Activated CD4-positive, alpha-beta memory T cell treated with anti-CD3 and anti-CD28 coated beads, Interleukin-2, amount 10 ng/mL, durations not matched to agents 7 days and 5 days (primary cell): ENCODE measurements at regions of chr6 and their contacts with region 1.

Region 1: DNA sequence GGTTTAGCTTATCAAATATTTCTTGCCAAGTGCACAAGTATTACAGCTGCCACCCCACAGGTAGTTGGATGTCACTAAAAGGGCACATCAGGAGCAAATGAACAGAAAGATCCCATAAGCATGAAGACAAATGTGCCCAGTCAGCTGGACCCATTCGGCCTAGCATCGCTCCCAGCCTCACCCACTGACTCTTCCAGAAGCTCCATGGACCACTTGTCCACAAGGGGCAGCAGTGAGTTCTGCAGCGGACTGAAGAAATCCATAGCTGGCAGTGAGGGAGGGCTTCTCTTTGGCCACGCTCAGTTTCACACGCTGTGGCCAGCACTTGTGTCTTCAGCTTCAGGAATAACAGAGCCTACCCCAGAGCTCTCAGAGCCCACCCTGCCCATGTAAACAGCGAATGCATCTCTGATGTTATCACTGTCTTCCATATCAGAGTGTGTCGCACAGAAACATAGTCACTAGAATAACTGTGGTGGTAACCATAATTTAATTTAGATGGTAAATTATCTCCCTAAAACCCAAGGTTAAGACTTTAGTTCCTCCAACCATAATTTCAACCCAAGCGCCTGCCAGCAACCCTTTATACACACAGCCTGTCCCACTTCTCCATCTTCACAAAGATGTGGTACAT is 15.8 kb downstream of the CGA start:
- DNase-seq: peak; percentile 52
- H3K4me3 Mint-ChIP-seq: no peak overlapping the region
- H3K27ac Mint-ChIP-seq: no peak overlapping the region
- H3K4me1 Mint-ChIP-seq: peaks cover 12% of the 10 kb centered on the region
- H3K27me3 Mint-ChIP-seq: peaks cover 21% of the 10 kb centered on the region

Region 2: GRCh38 chr6:87049779-87050178 is 29.3 kb before region 1 on chr6:
- CTCF ChIA-PET with region 1: interaction called, 11 read pairs
- POLR2A ChIA-PET with region 1: no interaction called
- DNase-seq: no peak
- H3K4me3 Mint-ChIP-seq: no peak overlapping the region
- H3K27ac Mint-ChIP-seq: no peak overlapping the region
- H3K4me1 Mint-ChIP-seq: no peaks in the 10 kb centered on the region
- H3K27me3 Mint-ChIP-seq: peaks cover 27% of the 10 kb centered on the region

Region 3: DNA sequence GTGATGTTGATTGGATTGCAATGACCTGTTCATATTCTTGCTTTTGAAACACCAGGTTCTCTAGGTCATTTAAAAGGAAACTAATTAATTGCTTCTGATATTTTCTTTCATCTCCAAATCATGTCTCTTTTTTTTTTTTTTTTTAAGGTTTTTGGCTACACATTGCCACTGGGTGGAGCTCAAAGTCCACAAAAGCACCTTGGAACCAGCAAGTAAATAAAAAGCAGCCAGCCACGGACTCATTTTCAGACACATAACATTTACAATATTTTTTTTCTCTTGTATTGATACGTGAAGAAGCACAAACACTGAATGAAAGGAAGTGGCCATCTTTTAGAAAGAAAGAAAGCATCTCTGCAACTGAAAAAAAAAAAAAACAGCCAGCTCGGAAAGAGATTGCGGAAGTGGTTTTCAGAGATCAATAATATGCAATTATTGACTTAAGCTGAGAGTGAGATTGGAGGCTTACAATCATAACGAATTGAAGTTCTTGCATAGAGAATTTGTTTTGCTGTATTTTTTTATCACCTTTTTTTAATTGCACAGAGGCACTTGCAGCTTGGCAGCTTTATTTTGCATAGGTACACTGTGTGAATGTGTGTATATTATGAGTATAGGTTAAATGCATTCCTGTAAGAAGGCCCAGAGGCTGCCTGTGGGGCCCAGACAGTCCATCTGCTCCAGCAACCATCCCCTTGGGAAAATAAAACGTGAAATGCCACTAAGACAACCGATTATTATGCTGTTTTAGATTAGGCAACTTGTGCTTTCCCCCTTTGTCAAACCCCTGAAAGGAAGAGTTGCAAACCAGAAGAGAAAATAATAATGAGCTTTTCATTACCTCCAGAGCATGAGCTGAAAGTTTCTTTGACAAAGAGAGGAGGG is 12.4 kb before region 1 on chr6:
- CTCF ChIA-PET with region 1: interaction called, 23 read pairs
- POLR2A ChIA-PET with region 1: no interaction called
- DNase-seq: peak; percentile 48
- H3K4me3 Mint-ChIP-seq: peak overlapping the region; percentile 36
- H3K27ac Mint-ChIP-seq: no peak overlapping the region
- H3K4me1 Mint-ChIP-seq: peaks cover 9% of the 10 kb centered on the region
- H3K27me3 Mint-ChIP-seq: peaks cover 29% of the 10 kb centered on the region

Region 4: DNA sequence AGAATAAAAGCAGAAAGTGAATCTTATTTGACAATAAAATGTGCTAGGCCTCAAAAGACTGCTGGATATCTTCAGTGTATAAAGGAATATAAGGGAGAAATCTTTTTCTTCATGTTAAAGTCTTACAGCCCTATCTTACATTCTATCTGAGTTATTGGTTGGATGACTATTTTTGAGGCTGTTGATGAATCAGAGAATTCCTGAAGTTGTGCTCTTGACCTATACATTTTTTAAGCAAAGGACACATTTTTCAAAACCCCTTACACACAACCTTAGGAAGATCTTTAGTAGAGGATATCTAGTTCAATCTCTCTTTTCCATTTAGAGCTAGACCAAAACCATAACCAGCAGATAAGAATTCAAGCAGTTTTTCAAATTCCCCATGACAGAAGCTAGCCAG is 26.7 kb after region 1 on chr6:
- CTCF ChIA-PET with region 1: interaction called, 14 read pairs
- POLR2A ChIA-PET with region 1: no interaction called
- DNase-seq: no peak
- H3K4me3 Mint-ChIP-seq: no peak overlapping the region
- H3K27ac Mint-ChIP-seq: no peak overlapping the region
- H3K4me1 Mint-ChIP-seq: no peaks in the 10 kb centered on the region
- H3K27me3 Mint-ChIP-seq: peaks cover 20% of the 10 kb centered on the region

Region 5: GRCh38 chr6:87808005-87808757 is 729.1 kb after region 1 on chr6:
- CTCF ChIA-PET with region 1: no interaction called
- POLR2A ChIA-PET with region 1: no interaction called
- DNase-seq: no peak
- H3K4me3 Mint-ChIP-seq: no peak overlapping the region
- H3K27ac Mint-ChIP-seq: no peak overlapping the region
- H3K4me1 Mint-ChIP-seq: peaks cover 13% of the 10 kb centered on the region
- H3K27me3 Mint-ChIP-seq: peaks cover under 1% of the 10 kb centered on the region